ENCODE measurements at regions of chr9 and their contacts with region 1.

Region 1: DNA sequence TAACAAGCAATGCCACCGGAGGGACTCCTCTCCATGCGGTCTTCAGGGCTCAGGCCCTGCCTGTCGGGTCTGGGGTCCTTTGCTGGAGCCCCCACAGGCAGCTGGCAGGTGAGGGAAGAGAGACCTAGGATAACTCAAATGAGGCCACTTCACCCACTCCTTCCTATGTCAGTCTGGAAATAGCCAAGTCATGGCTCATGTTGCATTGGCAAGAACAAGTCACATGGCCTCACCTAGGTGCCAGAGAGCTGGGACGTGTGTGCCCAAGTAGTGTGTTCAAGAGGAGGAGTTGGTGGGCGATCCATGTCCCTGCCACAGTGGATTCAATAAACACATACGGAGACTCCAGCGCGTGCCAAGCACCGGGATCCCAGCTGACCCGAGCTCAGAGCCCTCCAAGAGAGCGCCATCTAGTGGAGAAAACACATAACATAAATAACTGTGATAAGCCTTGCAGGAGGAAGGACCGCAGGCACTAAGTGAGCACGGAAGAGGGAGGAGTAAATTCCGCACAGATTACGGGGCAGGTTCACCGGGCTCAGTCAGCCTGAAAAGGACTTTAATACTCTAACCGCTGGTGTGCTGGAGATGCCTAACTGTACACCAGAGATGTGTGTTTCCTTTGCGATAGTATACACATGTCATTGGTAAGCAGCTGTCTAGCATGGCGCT is 580.8 kb downstream of the CCDC171 start:
- DNase-seq: peak; percentile 41
- H3K4me3 Mint-ChIP-seq: no peak overlapping the region
- H3K27ac Mint-ChIP-seq: no peak overlapping the region
- H3K4me1 Mint-ChIP-seq: peaks cover 17% of the 10 kb centered on the region
- H3K27me3 Mint-ChIP-seq: no peaks in the 10 kb centered on the region
- CTCF ChIP-seq: peak; percentile 56

Region 2: GRCh38 chr9:15873569-15874177 is 260.0 kb before region 1 on chr9:
- CTCF ChIA-PET with region 1: no interaction called
- intact Hi-C with region 1: loop called (anchors 1 kb)
- DNase-seq: no peak
- H3K4me3 Mint-ChIP-seq: no peak overlapping the region
- H3K27ac Mint-ChIP-seq: no peak overlapping the region
- H3K4me1 Mint-ChIP-seq: no peaks in the 10 kb centered on the region
- H3K27me3 Mint-ChIP-seq: no peaks in the 10 kb centered on the region
- CTCF ChIP-seq: peak; percentile 29